ENCODE measurements at regions of chr12 and their contacts with region 1.

Region 1: GRCh38 chr12:93677195-93678064 is at the start of gene CRADD:
- DNase-seq: peak; percentile 85
- ATAC-seq: peak; percentile 94
- total RNA-seq, gene CRADD: 40.3 TPM

Region 2: DNA sequence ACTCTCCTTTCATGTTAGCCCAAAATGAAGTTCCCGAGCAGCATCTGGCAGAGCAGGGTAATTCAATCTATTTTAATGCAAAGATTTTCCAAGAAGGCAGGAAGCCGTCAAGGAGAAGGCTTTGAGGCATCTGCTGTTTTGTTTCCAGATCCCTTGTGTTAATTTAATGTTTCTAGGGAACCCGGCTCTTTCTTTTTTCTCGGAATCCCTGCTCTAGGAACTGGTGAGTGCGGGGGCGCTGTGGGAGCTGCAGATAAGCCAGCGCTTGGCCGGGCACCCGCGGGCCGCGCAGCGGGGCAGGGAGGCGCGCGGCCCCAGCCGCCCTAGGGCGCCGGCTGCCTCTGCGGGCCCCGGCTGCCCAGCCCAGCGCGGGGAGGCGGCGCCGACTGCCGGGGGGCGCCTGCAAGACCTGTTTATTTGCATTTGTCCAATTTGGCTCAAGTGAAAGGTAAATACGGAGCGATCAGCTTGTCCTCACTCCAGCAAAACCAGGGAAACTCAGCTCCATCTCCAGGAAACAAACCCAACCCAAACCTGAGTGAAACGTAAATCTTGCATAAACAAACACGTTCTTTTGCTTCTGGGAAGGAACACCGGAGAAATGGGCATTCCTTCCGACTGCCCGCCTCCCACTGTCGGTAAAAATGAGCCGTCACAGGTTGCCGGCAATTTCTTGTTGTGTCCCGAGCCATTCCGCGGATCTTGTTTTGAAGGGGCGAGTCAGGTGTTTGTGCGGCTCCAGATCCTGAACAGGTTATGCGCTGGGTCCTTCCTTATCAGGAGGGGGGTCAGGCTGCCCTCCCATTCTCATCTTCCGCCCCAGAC is 64.9 kb after region 1 on chr12:
- intact Hi-C with region 1: loop called (anchors 2 kb)
- DNase-seq: peak; percentile 88
- ATAC-seq: peak; percentile 92

Region 3: GRCh38 chr12:93979189-93979588 is 301.8 kb after region 1 on chr12:
- intact Hi-C with region 1: loop called (anchors 10 kb)
- DNase-seq: no peak
- ATAC-seq: no peak

Region 4: GRCh38 chr12:94074980-94075928 is 397.8 kb after region 1 on chr12:
- intact Hi-C with region 1: loop called (anchors 2 kb)
- DNase-seq: peak; percentile 81
- ATAC-seq: peak; percentile 92